Activated CD4-positive, alpha-beta T cell treated with anti-CD3 and anti-CD28 coated beads, Interleukin-2, amount 10 ng/mL, durations not matched to agents 7 days and 5 days (primary cell): ENCODE measurements at regions of chr7 and their contacts with region 1.

Region 1: GRCh38 chr7:44973610-44974401 is 5.0 kb downstream of the MYO1G start:
- DNase-seq: peak; percentile 72
- H3K4me3 Mint-ChIP-seq: no peak overlapping the region
- H3K27ac Mint-ChIP-seq: peak overlapping the region; percentile 50
- H3K4me1 Mint-ChIP-seq: peaks cover 38% of the 10 kb centered on the region
- H3K27me3 Mint-ChIP-seq: no peaks in the 10 kb centered on the region

Region 2: GRCh38 chr7:44824894-44825526 is 148.8 kb before region 1 on chr7:
- CTCF ChIA-PET with region 1: no interaction called
- POLR2A ChIA-PET with region 1: no interaction called
- DNase-seq: no peak
- H3K4me3 Mint-ChIP-seq: no peak overlapping the region
- H3K27ac Mint-ChIP-seq: peak overlapping the region; percentile 37
- H3K4me1 Mint-ChIP-seq: peaks cover 18% of the 10 kb centered on the region
- H3K27me3 Mint-ChIP-seq: no peaks in the 10 kb centered on the region

Region 3: DNA sequence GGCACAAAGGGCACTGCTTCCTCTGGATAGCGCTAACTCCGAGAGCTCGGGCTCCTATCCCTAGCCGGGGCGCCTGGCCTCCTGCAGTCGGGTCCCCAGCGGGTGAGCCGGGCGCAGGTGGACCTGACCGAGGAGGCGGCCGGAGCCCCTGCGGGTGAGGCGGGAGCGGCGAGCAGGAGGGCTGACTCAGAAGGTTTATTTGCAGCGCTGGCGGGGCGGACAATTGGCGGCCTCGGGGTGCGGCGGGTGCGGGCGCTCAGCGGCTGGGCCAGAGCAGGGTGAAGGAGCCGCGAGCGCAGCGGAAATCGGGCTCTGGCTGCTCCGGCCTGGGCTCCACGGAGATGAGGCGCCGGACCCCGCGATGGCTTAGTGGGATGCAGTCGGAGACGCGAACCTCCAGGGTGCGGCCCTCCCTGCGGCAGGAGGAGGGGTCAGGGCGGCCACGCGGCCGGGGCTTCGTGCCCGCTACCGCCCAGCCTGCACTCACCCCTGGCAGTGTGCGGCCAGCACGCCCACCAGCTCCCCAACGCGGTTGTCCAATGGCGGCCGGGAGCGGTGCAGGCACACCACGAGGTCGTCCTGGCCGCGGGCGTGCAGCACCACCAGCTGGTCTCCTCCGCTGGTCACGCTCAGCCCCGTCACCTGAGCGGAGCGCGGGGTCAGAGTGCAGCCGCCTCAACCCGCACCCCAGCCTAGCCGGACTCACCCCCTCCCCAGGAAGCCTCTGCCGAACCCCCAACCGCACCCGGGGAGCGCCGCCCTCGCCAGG is 11.1 kb before region 1 on chr7:
- CTCF ChIA-PET with region 1: interaction called, 26 read pairs
- POLR2A ChIA-PET with region 1: interaction called, 4 read pairs
- DNase-seq: peak; percentile 5
- H3K4me3 Mint-ChIP-seq: no peak overlapping the region
- H3K27ac Mint-ChIP-seq: no peak overlapping the region
- H3K4me1 Mint-ChIP-seq: peaks cover 19% of the 10 kb centered on the region
- H3K27me3 Mint-ChIP-seq: no peaks in the 10 kb centered on the region

Region 4: DNA sequence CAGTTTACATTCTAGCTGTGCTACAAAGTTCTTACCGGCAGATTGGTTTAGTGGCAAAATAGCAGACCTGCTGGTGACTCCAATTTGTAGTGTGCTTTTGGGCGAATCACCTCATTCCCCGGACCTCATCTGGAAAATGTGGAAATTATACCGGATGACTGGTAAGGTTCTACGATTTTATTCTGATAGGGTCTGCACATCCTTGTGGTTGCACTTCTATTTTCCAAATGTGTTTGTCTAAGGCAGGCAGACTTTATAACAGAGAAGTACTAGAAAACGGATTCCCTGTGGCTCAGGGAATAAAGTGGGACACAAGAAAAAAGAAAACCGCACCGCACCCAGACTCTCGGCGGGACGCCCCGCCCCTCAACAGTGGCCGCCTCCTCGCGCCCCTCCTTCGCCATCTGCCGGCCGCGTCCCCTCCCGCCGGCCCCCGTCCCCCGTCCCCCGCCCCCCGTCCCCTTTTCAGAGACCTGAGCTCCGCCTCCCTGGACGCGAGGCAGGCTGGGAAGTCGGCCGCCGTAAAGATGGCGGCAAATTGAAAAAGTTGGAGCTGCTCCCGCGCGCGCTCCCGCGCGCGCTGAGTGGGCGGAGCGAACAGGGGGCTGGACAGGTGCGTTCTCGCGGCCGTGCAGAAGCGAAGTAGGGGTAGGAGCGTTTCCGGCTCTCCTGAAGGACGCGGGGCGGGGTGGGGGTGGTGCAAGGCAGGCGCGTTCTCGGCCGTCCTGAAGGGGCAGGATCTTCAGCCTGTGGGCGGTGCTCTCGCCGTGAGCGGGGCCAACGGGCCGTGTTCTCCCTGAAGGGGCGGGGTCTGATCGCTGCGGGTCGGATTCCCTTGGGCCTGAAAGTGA is 25.7 kb after region 1 on chr7:
- CTCF ChIA-PET with region 1: interaction called, 11 read pairs
- POLR2A ChIA-PET with region 1: interaction called, 9 read pairs
- DNase-seq: peak; percentile 100
- H3K4me3 Mint-ChIP-seq: peak overlapping the region; percentile 86
- H3K27ac Mint-ChIP-seq: peak overlapping the region; percentile 90
- H3K4me1 Mint-ChIP-seq: peaks cover 64% of the 10 kb centered on the region
- H3K27me3 Mint-ChIP-seq: no peaks in the 10 kb centered on the region

Region 5: GRCh38 chr7:45021604-45022296 is 47.9 kb after region 1 on chr7:
- CTCF ChIA-PET with region 1: interaction called, 16 read pairs
- POLR2A ChIA-PET with region 1: interaction called, 6 read pairs
- DNase-seq: no peak
- H3K4me3 Mint-ChIP-seq: no peak overlapping the region
- H3K27ac Mint-ChIP-seq: peak overlapping the region; percentile 74
- H3K4me1 Mint-ChIP-seq: peaks cover 57% of the 10 kb centered on the region
- H3K27me3 Mint-ChIP-seq: no peaks in the 10 kb centered on the region

Region 6: GRCh38 chr7:45026984-45027773 is 53.4 kb after region 1 on chr7:
- CTCF ChIA-PET with region 1: interaction called, 16 read pairs
- POLR2A ChIA-PET with region 1: interaction called, 6 read pairs
- DNase-seq: peak; percentile 63
- H3K4me3 Mint-ChIP-seq: peak overlapping the region; percentile 81
- H3K27ac Mint-ChIP-seq: peak overlapping the region; percentile 87
- H3K4me1 Mint-ChIP-seq: peaks cover 60% of the 10 kb centered on the region
- H3K27me3 Mint-ChIP-seq: no peaks in the 10 kb centered on the region

Region 7: GRCh38 chr7:45033261-45033930 is 59.6 kb after region 1 on chr7:
- CTCF ChIA-PET with region 1: interaction called, 24 read pairs
- POLR2A ChIA-PET with region 1: interaction called, 7 read pairs
- DNase-seq: peak; percentile 26
- H3K4me3 Mint-ChIP-seq: peak overlapping the region; percentile 60
- H3K27ac Mint-ChIP-seq: peak overlapping the region; percentile 79
- H3K4me1 Mint-ChIP-seq: peaks cover 75% of the 10 kb centered on the region
- H3K27me3 Mint-ChIP-seq: no peaks in the 10 kb centered on the region

Region 8: DNA sequence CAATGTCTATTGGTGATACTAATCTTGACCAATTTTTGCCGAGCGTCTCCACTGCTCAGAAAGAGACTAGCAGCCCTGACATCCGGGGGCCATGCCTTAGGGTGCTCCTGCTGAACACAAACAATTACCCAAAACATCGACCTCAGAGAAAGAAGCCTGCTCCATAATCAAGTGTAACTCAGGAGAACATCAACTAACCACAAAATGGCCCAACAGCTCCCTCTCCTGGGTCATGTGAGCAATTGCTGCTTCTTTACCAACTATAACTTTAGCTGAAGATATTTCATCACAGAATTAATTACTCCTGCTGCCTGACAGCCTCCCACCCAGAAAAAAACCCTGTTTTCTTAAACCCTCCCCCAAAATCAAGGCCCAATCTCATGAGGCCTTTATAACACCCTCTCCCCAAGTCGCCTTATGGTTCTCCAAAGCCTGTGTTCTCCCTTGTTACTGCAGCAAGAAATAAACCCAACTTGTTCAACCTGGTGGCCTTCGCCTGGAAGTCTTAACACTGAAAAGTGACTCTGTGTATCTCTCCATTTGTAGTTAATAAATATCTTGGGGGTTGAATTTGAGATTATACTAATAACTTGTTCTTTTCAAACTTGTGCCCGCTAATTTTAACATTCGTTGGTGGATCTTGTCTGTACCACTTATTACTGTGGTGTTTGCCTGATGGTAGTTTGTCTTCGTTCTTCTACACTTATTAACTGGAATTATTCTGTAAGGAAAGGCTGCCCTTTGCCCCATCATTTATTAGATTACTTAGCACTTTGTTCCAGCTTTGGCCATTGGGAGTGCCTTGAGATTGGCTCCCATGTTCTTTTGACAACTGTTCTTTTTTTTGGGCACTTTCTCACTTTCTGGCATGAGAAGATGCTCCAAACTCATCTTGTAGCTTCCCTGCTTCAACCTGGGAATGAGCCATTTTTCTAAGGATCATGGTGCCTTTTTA is 162.6 kb after region 1 on chr7:
- CTCF ChIA-PET with region 1: interaction called, 44 read pairs
- POLR2A ChIA-PET with region 1: interaction called, 4 read pairs
- DNase-seq: peak; percentile 83
- H3K4me3 Mint-ChIP-seq: no peak overlapping the region
- H3K27ac Mint-ChIP-seq: peak overlapping the region; percentile 42
- H3K4me1 Mint-ChIP-seq: peaks cover 27% of the 10 kb centered on the region
- H3K27me3 Mint-ChIP-seq: peaks cover 3% of the 10 kb centered on the region